HEK293 (cell line): ENCODE measurements at regions of chr14 and their contacts with region 1.

Region 1: DNA sequence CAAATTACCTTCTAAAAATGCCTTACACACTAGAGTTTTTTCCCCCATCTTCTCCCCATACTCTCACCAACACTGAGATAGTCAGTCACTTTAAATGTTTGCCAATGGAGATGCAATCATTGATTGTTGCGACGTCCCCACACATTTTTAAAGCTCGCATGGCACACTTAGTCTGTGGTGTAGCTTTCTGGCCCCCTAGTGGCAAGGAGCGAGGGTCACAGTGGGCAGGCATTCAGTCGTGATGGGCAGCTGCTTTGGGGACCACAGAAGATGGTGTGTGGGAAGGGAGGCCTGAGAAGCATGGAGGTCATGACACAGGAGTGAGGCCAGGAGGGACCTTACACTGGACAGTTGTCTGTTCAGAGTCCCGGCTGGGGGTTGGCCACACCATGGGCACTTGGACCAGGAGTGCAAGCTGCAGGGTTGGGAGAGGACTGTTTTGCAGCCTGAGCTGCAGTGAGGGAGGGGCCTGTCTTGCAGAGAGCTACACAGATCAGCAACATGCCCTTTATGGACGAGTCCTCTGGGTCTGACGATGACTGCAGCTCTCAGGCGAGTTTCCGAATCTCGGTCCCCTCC is 28.7 kb downstream of the PIGH start:
- H3K4me3 ChIP-seq: no peak overlapping the region
- H3K27ac ChIP-seq: no peak overlapping the region
- H3K4me1 ChIP-seq: no peaks in the 10 kb centered on the region
- CTCF ChIP-seq: peak; percentile 62

Region 2: DNA sequence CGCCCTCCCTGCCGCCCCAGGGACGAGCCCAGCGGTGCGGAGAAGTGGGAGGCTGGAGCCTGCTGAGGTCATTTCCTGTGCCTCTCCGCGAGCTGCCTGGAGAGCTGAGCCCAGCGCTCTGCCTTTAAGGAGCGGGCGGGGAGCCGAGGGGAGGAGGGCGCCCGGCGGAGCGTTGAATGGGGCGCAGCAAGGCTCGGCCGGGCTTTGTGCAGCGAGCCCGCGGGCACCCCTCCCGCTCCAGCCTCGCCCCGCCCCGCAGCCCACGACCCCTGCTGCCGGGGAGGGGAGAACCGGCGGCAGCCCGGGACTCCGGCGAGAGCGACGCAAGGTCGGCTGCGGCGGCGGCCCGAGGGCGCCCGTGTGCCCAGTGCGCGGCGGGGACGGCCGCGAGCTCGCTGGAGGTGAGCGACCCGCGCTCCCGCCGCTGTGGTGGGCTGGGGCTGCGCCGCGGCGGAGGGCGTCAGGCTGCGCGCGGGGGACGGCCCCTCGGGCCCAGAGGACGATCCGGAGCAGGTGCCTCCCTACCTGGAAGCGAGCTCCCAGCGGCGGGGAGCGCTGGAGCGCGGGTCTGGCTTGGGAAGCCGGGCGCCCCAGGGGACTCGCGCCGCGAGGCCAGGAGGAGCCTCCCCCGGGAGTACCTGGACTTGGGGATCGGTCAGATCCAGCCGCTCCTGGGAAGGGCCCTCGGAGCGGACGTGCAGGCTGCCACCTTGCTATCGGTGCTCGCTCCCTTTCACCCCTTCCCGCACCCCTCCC is 38.2 kb before region 1 on chr14 and contains the start of gene PLEKHH1:
- CTCF ChIA-PET with region 1: interaction called, 143 read pairs
- POLR2A ChIA-PET with region 1: interaction called, 3 read pairs
- H3K4me3 ChIP-seq: peak within 1 kb of the TSS; percentile 71
- H3K27ac ChIP-seq: peak within 1 kb of the TSS; percentile 94
- H3K4me1 ChIP-seq: no peaks in the 10 kb centered on the region
- CTCF ChIP-seq: no peak

Region 3: GRCh38 chr14:67557126-67557525 is 14.2 kb before region 1 on chr14:
- CTCF ChIA-PET with region 1: interaction called, 20 read pairs
- POLR2A ChIA-PET with region 1: interaction called, 6 read pairs
- H3K4me3 ChIP-seq: no peak overlapping the region
- H3K27ac ChIP-seq: no peak overlapping the region
- H3K4me1 ChIP-seq: no peaks in the 10 kb centered on the region; the same call in 1 of the 2 replicates
- CTCF ChIP-seq: no peak

Region 4: GRCh38 chr14:67583711-67584644 is 12.6 kb after region 1 on chr14:
- CTCF ChIA-PET with region 1: interaction called, 49 read pairs
- POLR2A ChIA-PET with region 1: no interaction called
- H3K4me3 ChIP-seq: no peak overlapping the region
- H3K27ac ChIP-seq: no peak overlapping the region
- H3K4me1 ChIP-seq: no peaks in the 10 kb centered on the region
- CTCF ChIP-seq: peak; percentile 77

Region 5: DNA sequence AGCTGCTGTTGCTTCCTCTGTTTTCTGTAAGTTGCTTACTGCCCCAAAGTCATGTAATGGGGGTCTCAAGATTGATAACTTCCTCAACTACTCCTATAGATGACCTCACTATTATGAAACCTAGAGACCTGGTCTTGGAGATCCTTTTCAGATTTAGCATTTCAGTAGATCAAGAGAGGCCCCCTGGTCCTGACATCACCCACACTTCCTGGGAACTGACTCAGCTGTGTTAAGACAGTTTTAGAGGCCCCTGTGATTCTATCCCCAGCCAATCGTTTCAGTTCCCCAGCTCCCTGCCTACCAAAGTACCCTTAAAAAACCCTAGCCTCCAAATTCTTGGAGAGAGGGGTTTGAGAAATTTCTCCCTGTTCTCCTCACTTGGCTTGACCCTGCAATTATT is 39.1 kb after region 1 on chr14:
- CTCF ChIA-PET with region 1: no interaction called
- POLR2A ChIA-PET with region 1: no interaction called
- H3K4me3 ChIP-seq: no peak overlapping the region
- H3K27ac ChIP-seq: no peak overlapping the region
- H3K4me1 ChIP-seq: no peaks in the 10 kb centered on the region
- CTCF ChIP-seq: no peak